ENCODE measurements at regions of chr6 and their contacts with region 1.

Region 1: GRCh38 chr6:30212865-30213666 is at the start of gene TRIM26:
- DNase-seq: peak; percentile 93 to 98 (median 98)
- H3K4me3 ChIP-seq: peak within 1 kb of the TSS; percentile 78
- H3K4me3 Mint-ChIP-seq: peak within 1 kb of the TSS; percentile 87 to 98 (median 94)
- H3K27ac ChIP-seq: peak within 1 kb of the TSS; percentile 97
- H3K27ac Mint-ChIP-seq: peak within 1 kb of the TSS; percentile 96 to 100 (median 100)
- H3K4me1 ChIP-seq: peaks cover 44% of the 10 kb centered on the region
- H3K4me1 Mint-ChIP-seq: peaks cover 54 to 64% (median 60%) of the 10 kb centered on the region in 3 donors
- H3K27me3 ChIP-seq: no peaks in the 10 kb centered on the region
- H3K27me3 Mint-ChIP-seq: no peaks in the 10 kb centered on the region
- total RNA-seq, gene TRIM26: 94.6 to 102 TPM

Region 2: DNA sequence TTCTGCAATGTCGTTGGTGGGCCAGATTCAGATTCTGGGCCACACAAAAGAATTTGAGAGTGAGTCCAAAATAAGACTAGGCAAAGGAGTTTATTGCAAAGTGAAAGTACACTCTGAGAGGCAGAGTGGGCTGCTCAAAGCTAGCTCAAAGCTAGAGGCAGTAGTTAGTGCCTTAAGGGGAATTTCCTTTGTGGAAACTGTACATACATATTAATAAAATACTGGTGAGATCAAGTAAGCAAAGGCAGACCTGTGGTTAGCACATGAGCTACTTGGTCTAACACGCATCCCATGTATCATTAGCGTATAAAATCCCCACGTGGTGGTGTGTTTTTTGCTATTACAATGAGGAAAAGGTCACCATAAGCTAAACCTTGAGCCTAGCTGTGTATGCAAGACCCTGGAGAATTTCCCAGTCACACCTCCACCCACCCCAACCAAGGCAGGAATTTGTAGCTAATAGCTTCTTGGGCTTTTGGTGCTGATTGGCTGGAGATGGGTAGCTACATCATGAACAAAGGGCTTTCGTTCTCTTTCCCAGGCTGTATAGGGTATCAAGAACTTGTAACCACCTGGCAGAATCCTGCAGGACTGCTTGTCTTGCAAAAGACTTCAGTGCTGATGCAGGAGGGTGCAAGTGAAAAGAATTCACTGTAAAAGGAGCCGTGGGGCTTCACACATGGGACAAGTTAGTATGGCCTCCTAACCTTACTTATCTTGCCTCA is 14.9 kb after region 1 on chr6:
- CTCF ChIA-PET with region 1: interaction called, 8 read pairs
- POLR2A ChIA-PET with region 1: interaction called, 10 read pairs
- DNase-seq: peak in 1 of 5 donors; percentile 19
- H3K4me3 ChIP-seq: peak overlapping the region; percentile 0
- H3K4me3 Mint-ChIP-seq: peak overlapping the region; percentile 11 to 78 (median 62)
- H3K27ac ChIP-seq: no peak overlapping the region
- H3K27ac Mint-ChIP-seq: peak overlapping the region; percentile 70 to 98 (median 83)
- H3K4me1 ChIP-seq: peaks cover 5% of the 10 kb centered on the region
- H3K4me1 Mint-ChIP-seq: peaks cover 16 to 19% (median 17%) of the 10 kb centered on the region in 3 donors
- H3K27me3 ChIP-seq: no peaks in the 10 kb centered on the region
- H3K27me3 Mint-ChIP-seq: peaks cover 1 to 2% of the 10 kb centered on the region in 2 donors